ENCODE measurements at regions of chr1 and their contacts with region 1.

Region 1: GRCh38 chr1:45018599-45019230 is 6.7 kb downstream of the UROD start:
- DNase-seq: peak; percentile 65
- H3K4me3 ChIP-seq: no peak overlapping the region
- H3K27ac ChIP-seq: no peak overlapping the region
- H3K4me1 ChIP-seq: no peaks in the 10 kb centered on the region
- H3K27me3 ChIP-seq: no peaks in the 10 kb centered on the region
- CTCF ChIP-seq: peak; percentile 85

Region 2: DNA sequence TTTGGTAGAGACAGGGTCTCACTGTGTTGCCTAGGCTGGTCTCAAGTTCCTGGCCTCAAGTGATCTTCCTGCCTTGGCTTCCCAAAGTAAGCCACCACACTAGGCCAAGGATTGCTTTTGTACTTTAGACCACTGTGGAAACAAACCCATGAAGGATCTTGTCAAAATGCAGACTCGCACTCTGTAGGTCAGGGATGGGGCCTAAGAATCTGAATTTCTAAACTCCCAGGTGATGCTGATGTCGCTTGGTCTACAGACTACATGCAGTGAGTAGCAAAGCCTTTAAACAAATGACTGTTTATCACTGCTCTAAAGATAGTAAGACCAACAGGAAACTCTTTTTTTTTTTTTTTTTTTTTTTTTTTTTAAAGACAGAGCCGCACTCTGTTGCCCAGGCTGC is 375.6 kb after region 1 on chr1:
- CTCF ChIA-PET with region 1: interaction called, 15 read pairs
- POLR2A ChIA-PET with region 1: no interaction called
- intact Hi-C with region 1: no loop called
- DNase-seq: no peak
- H3K4me3 ChIP-seq: no peak overlapping the region
- H3K27ac ChIP-seq: no peak overlapping the region
- H3K4me1 ChIP-seq: no peaks in the 10 kb centered on the region
- H3K27me3 ChIP-seq: no peaks in the 10 kb centered on the region
- CTCF ChIP-seq: no peak

Region 3: GRCh38 chr1:45854724-45855123 is 836.0 kb after region 1 on chr1:
- CTCF ChIA-PET with region 1: no interaction called
- POLR2A ChIA-PET with region 1: no interaction called
- intact Hi-C with region 1: no loop called
- DNase-seq: no peak
- H3K4me3 ChIP-seq: no peak overlapping the region
- H3K27ac ChIP-seq: no peak overlapping the region
- H3K4me1 ChIP-seq: no peaks in the 10 kb centered on the region
- H3K27me3 ChIP-seq: no peaks in the 10 kb centered on the region
- CTCF ChIP-seq: no peak